OCI-LY7 (cell line): ENCODE measurements at regions of chr1 and their contacts with region 1.

Region 1: DNA sequence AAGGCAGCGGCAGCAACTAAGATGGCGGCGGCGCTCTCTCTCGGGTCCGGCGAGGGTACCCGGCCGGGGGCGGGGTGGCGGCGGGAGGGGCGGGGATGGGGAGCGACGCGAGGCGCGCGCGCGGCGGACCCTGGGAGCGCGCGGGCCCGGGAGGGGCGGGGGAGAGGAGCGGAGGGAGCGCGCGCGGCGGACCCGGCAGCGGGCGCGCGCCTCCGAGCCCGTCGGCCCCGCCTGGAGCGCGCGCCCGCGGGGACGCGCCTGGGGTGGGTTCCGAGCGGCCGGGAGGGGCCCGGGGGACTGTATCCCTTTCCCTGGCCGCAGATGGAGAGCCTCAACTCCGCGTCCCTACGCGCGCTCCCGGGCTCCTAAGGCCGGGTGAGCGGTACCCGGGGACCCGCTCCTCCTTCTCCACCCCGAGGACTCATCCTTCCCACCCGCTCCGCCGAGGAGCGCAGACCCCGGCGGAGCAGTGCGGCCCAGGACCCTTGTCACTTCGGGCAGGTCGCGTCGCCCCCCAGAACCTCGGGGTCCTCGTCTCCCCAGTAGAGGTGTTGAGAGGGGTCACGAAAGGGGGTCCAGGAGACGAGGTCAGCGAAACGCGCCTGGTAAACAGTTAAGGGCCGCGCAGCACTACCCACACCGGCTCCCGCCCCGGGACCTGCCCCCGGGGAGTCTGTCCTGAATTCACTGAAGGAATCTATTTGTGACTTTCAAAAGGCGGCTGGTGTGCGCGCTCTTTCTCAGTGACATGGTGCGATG is at the start of gene CLSTN1:
- DNase-seq: peak; percentile 92
- H3K4me3 ChIP-seq: peak within 1 kb of the TSS; percentile 98
- H3K27ac ChIP-seq: peak within 1 kb of the TSS; percentile 34
- H3K4me1 ChIP-seq: peaks cover 46% of the 10 kb centered on the region
- CTCF ChIP-seq: no peak
- total RNA-seq, gene CLSTN1: 49.4 and 58.6 TPM in 2 replicates

Region 2: DNA sequence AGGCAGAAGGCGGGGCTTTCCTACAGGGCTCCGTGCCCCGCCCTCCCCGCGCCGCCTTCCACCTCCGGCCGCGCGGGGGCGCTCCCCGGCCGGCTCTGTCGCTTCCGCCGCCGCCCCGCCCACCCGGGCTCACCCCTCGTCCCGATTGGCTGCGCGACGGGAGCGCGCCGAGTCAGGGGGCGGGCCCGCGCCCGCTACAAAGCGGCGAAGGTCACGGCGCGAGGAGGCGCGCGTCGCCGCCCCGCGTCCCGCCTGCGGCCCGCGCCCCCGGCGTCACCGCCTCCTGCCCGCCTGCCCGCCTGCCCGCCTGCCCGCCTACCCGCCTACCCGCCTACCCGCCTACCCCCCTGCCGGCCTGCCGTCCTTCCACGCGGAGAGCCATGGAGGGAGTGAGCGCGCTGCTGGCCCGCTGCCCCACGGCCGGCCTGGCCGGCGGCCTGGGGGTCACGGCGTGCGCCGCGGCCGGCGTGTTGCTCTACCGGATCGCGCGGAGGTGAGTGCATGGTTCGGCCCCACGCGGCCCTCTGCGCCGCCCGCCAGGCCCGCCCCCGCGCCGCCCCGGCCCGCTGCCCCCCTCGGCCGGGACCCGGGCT is 235.5 kb before region 1 on chr1 and contains the start of gene TMEM201:
- CTCF ChIA-PET with region 1: no interaction called
- POLR2A ChIA-PET with region 1: no interaction called
- intact Hi-C with region 1: loop called (anchors 2 kb)
- DNase-seq: peak; percentile 95
- H3K4me3 ChIP-seq: peak within 1 kb of the TSS; percentile 90
- H3K27ac ChIP-seq: no peak within 1 kb of the TSS
- H3K4me1 ChIP-seq: peaks cover 40% of the 10 kb centered on the region
- CTCF ChIP-seq: peak; percentile 79
- total RNA-seq, gene TMEM201: 5.3 and 7.5 TPM in 2 replicates

Region 3: DNA sequence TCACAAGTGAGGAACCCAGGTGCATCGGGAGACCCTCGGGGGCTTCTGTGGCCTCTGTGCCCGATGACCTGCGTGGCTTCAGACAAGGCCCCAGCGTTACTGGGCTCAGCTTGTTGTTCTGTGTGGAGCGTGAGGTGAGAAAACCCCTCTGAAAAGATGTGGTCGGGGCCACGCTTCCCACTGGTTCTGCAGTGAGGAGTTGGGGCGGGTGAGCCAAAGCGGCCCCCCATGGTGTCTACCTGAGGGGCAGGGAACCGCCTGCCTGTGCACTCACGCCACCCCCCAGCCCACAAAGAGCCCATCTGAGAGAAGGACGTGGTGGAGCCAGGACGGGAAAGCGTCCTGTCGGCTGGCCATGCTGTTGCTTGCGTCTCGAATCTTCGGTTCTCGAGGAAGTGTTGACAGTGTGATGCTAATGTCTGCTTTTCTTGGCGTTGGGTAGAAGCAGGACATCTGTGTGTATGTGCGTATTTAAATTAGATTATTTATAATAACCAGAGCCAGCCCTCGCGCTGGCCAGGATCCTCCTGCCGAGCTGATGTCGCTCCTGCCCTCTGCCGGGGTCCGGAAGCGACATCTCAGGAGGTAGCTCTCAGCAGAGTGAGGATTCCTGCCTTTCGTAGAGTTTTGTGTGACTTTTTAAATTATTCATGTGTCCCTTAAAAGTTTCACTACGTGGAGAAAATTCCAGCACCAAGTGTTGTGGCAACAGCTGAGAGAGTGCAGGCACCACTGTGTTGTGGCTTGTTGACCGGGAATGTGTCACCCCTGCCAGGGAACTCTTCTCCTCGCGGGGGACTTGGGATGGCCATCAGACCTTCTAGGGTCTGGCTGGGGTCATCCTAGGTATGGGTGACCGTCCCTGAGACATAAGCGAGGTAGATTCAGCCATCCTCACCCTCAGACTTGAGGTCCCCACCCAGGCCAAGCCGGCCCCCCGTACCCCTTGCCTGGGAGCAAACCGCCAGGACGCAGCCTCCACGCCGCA is 220.1 kb before region 1 on chr1:
- CTCF ChIA-PET with region 1: no interaction called
- POLR2A ChIA-PET with region 1: no interaction called
- intact Hi-C with region 1: no loop called
- DNase-seq: no peak
- H3K4me3 ChIP-seq: no peak overlapping the region
- H3K27ac ChIP-seq: no peak overlapping the region
- H3K4me1 ChIP-seq: no peaks in the 10 kb centered on the region
- CTCF ChIP-seq: no peak

Region 4: GRCh38 chr1:9852410-9853248 is 28.5 kb after region 1 on chr1:
- CTCF ChIA-PET with region 1: interaction called, 3 read pairs
- POLR2A ChIA-PET with region 1: interaction called, 6 read pairs
- intact Hi-C with region 1: loop called (anchors 1 kb)
- DNase-seq: no peak
- H3K4me3 ChIP-seq: peak overlapping the region; percentile 73
- H3K27ac ChIP-seq: no peak overlapping the region
- H3K4me1 ChIP-seq: peaks cover 46% of the 10 kb centered on the region
- CTCF ChIP-seq: no peak

Region 5: DNA sequence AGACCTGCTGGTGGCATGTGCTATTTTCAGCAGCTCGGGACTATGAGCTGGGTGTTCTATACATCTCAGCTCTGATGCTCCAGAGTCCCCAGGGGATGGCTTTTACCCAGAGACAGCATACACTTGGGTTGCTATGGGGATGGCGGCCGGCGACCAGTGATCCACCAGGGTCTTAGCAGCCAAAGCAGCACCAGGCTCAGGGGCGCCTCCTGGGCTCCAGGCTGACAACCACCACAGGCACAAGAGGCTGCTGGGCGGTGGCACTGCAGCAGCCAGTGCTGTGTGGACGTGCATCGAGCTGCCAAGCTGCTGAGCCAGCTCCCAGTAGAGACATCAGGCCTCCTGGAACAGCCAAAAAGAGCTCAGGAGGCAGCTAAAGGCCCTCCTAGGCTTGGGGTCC is 37.2 kb after region 1 on chr1:
- CTCF ChIA-PET with region 1: no interaction called
- POLR2A ChIA-PET with region 1: interaction called, 4 read pairs
- intact Hi-C with region 1: loop called (anchors 2 kb)
- DNase-seq: peak; percentile 54
- H3K4me3 ChIP-seq: no peak overlapping the region
- H3K27ac ChIP-seq: no peak overlapping the region
- H3K4me1 ChIP-seq: peaks cover 51% of the 10 kb centered on the region
- CTCF ChIP-seq: peak; percentile 61

Region 6: DNA sequence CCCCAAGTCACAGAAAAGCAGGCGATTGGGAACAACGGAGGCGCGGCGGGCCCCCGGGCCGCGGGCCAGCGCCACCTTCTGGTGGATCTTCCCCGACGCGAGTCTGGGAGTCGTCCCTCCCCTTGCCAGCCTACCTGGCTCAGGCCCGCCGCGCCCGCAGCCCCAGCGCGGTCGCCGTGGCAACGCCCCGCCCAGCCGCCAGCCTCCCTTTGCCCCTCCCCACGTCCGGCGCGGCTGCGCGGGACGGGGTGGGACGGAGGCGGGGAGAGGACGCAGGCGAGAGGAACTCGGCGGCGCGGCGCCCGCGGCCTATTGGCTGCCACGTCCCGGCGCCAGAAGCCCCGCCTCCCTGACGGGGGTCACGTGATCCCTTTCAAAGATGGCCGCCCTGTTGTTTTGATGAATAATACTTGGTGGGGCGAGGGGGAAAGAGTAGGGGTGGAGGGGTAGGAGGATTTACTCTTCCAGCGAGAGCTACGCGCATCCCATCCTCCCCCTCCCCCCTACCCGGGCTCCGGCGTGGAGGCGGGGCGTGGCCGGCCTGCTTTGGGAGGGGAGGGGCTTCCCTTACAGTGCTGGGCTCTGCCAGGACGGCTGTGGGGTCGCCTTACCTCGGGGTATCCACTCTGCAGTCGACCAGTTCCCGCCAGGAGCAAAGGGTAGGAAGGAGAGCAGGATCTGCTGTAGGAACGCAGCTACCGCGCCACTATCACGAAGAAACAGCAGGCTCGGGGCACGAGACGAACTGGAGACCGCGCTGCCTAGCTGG is 208.7 kb after region 1 on chr1 and contains the start of gene UBE4B:
- CTCF ChIA-PET with region 1: no interaction called
- POLR2A ChIA-PET with region 1: no interaction called
- intact Hi-C with region 1: loop called (anchors 2 kb)
- DNase-seq: peak; percentile 98
- H3K4me3 ChIP-seq: peak within 1 kb of the TSS; percentile 98
- H3K27ac ChIP-seq: peak within 1 kb of the TSS; percentile 80
- H3K4me1 ChIP-seq: peaks cover 16% of the 10 kb centered on the region
- CTCF ChIP-seq: peak; percentile 84
- total RNA-seq, gene UBE4B: 19.7 and 21.5 TPM in 2 replicates